ENCODE measurements at regions of chr16 and their contacts with region 1.

Region 1: DNA sequence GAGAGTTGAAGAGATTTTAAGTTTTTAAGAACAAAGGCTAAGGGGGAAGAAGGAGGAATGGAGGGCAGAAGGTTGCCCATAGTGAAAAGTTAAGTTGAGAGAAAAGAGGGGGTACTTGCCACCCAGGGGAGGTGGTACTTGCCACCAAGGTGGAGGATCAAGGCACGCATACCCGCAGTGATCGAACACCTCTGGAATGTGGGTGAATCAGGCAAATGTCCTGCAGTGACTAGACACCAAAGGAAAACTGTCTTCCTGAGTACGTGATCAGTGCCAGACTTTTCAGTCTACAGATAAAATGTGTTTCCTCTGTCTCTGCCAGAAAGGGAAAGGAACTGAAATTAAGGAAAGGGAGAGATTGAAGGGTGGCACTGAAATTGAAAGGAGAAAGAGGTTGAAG is 2285.3 kb downstream of the TP53TG3F start:
- DNase-seq: no peak

Region 2: DNA sequence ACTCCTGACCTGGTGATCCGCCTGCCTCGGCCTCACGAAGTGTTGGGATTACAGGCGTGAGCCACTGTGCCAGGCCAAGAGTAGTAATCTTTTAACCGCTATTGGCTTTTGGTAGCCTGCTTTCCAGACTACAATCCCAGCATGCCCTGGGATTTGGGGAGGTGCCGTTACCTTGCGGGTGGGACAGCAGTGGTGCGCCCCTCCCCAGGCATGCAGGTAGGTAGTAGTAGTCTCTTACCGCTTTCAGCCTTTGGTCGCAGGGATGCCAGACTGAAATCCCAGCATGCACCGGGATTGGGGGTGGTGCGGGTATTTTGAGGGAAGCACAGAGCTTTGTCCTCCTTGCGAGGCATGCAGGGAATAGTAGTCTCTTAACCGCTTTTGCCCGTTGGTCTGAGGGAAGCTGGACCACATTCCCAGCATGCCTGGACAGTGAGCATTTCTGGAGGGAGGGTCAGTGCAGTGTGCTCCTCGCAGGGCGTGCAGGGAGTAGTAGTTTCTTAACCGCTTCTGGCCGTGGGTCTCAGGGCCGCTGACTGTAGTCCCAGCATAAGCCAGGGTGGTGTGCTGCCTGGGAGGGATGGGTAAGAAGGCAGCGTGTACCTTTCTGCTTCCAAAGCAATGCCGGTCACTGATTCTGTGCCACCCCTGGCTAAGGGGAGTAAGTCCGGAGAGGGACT is 598.5 kb before region 1 on chr16:
- intact Hi-C with region 1: no loop called
- DNase-seq: no peak

Region 3: DNA sequence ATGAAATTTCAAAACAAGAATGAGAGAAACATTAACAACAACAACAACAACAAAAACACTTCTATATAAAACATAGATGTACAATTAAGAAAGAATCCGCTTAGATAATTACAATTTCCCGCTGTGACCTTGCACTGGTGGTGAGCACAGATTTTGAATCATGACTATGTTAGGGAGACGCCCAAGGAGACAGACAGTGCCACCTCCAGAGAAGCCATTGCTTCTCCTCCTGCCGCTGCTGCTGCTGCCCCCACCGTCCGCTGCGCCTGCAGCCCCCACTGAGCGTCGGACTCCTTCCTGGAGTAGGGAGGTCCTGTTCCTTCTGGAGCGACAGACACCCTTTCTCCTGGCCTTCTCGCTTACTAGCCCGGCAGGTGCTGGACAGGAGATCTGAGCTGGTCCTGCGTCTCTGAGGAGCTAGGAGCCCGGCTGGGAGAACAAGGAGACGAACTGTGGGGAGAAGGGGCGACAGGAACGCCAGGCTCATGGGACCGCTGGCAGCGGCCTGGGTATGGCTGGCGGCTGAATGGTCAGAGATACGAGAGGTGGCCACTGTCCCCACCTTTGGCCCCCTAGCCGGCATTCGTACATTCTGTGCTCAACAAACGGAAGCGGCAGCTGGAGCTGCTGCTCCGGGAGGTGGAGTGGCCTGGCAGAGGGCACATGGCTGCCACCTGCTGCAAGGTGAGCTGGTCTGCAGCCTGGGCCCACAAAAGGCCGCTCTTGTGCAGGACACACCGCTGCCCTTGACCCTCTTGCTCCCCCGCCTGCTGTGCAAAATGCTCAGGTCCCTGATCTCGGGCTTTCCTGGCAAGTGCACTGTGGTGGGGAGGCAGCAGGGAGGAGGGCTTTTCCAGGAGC is 218.8 kb before region 1 on chr16:
- intact Hi-C with region 1: loop called in 1 of 2 experiments (anchors 5 kb)
- DNase-seq: no peak